CD4-positive, alpha-beta memory T cell (primary cell): ENCODE measurements at regions of chr11 and their contacts with region 1.

Region 1: DNA sequence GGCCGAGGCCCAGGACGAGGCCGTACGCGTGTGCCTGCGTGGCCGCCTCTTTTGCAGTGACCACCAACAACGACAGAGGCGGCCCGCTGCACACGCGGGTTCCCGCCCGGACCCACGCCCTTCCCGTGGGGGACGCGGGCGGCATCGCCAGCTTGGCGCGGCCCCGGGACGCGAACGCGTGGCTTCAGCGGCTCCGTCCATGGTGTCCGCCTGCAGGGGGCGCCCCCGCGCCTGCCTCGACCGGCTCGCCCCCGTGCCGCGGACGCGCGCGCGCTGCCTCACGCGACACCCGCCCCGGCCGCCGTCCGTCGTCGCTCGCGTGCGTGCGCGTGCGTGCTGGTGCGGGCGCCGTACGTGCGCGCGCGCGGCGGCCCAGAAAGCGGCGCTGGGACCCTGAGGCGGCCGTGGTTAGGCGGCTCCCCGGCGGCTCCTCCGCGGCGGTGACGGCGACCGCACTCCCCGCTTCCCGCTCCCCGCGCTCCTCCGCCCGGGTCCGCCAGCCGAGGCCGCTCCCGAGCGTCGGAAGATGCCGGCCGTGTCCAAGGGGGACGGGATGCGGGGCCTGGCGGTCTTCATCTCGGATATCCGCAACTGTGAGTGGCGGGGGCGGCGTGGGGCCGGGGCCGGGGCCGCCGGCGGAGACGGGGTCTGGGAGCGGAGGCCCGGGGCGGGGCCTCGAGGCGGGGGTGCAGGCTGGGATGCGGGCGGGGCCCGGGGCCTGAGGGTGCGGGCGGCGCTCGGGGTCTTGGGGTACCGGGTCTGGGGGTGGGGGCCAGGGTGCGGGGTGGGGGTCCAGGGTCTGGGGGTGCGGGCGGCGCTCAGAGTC is at the start of gene AP2A2:
- DNase-seq: peak; percentile 80 to 94 (median 92)
- H3K4me3 ChIP-seq: peak within 1 kb of the TSS; percentile 52 to 63
- H3K4me3 Mint-ChIP-seq: peak within 1 kb of the TSS; percentile 87 to 90 (median 88)
- H3K27ac ChIP-seq: peak within 1 kb of the TSS; percentile 52
- H3K27ac Mint-ChIP-seq: peak within 1 kb of the TSS; percentile 82 to 94 (median 92)
- H3K4me1 ChIP-seq: peaks cover 39% of the 10 kb centered on the region
- H3K4me1 Mint-ChIP-seq: peaks cover 19 to 37% (median 30%) of the 10 kb centered on the region in 4 donors
- H3K27me3 ChIP-seq: no peaks in the 10 kb centered on the region
- H3K27me3 Mint-ChIP-seq: no peaks in the 10 kb centered on the region
- total RNA-seq, gene AP2A2: 81.7 to 87.4 TPM

Region 2: GRCh38 chr11:355581-356458 is 569.9 kb before region 1 on chr11:
- CTCF ChIA-PET with region 1: no interaction called
- POLR2A ChIA-PET with region 1: no interaction called
- intact Hi-C with region 1: no loop called
- DNase-seq: peak; percentile 85 to 90 (median 86)
- H3K4me3 ChIP-seq: peak overlapping the region in 1 of 2 donors; percentile 59
- H3K4me3 Mint-ChIP-seq: peak overlapping the region; percentile 77 to 91 (median 84)
- H3K27ac ChIP-seq: peak overlapping the region; percentile 89
- H3K27ac Mint-ChIP-seq: peak overlapping the region in 6 of 7 donors; percentile 96 to 99 (median 97)
- H3K4me1 ChIP-seq: peaks cover 20% of the 10 kb centered on the region
- H3K4me1 Mint-ChIP-seq: peaks cover 7 to 50% (median 29%) of the 10 kb centered on the region in 4 donors
- H3K27me3 ChIP-seq: no peaks in the 10 kb centered on the region
- H3K27me3 Mint-ChIP-seq: no peaks in the 10 kb centered on the region

Region 3: GRCh38 chr11:460331-461199 is 465.1 kb before region 1 on chr11:
- CTCF ChIA-PET with region 1: no interaction called
- POLR2A ChIA-PET with region 1: no interaction called
- intact Hi-C with region 1: no loop called
- DNase-seq: no peak
- H3K4me3 ChIP-seq: no peak overlapping the region
- H3K4me3 Mint-ChIP-seq: no peak overlapping the region
- H3K27ac ChIP-seq: no peak overlapping the region
- H3K27ac Mint-ChIP-seq: no peak overlapping the region
- H3K4me1 ChIP-seq: peaks cover 24% of the 10 kb centered on the region
- H3K4me1 Mint-ChIP-seq: peaks cover 20 to 28% (median 22%) of the 10 kb centered on the region in 4 donors
- H3K27me3 ChIP-seq: no peaks in the 10 kb centered on the region
- H3K27me3 Mint-ChIP-seq: no peaks in the 10 kb centered on the region

Region 4: GRCh38 chr11:842370-843002 is 83.2 kb before region 1 on chr11 and contains the starts of genes POLR2L and TSPAN4:
- CTCF ChIA-PET with region 1: no interaction called
- POLR2A ChIA-PET with region 1: interaction called, 4 read pairs
- intact Hi-C with region 1: loop called (anchors 2 kb)
- DNase-seq: peak; percentile 83 to 94 (median 85)
- H3K4me3 ChIP-seq: peak within 1 kb of the TSS; percentile 57 to 97
- H3K4me3 Mint-ChIP-seq: peak within 1 kb of the TSS; percentile 84 to 89 (median 86)
- H3K27ac ChIP-seq: peak within 1 kb of the TSS; percentile 77
- H3K27ac Mint-ChIP-seq: peak within 1 kb of the TSS; percentile 66 to 89 (median 84)
- H3K4me1 ChIP-seq: peaks cover 31% of the 10 kb centered on the region
- H3K4me1 Mint-ChIP-seq: peaks cover 4 to 35% (median 15%) of the 10 kb centered on the region in 4 donors
- H3K27me3 ChIP-seq: no peaks in the 10 kb centered on the region
- H3K27me3 Mint-ChIP-seq: peaks cover 0 to 2% of the 10 kb centered on the region in 2 donors
- total RNA-seq, gene POLR2L: 55.8 to 56.2 TPM
- total RNA-seq, gene TSPAN4: 5.3 to 5.8 TPM

Region 5: DNA sequence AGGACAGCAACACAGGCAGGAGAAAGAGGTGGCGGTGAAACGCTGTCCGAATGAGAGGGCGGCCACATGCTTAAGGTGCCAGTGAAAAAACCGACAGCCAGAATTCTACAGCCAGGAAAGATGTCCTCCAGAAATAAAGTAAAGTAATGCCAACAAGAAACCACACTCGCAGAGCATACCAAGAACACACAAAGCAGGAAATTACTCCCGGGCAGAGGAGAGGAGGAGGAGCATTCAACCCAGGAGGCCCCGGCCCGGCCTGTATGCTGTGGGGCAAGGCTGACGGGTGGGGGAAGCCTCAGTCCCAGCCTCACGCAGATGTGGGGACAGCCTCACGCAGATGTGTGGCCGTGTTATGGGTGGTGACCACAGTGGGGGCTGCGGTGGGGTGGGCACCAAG is 43.1 kb before region 1 on chr11:
- CTCF ChIA-PET with region 1: no interaction called
- POLR2A ChIA-PET with region 1: no interaction called
- intact Hi-C with region 1: no loop called
- DNase-seq: peak in 1 of 5 donors; percentile 7
- H3K4me3 ChIP-seq: no peak overlapping the region
- H3K4me3 Mint-ChIP-seq: no peak overlapping the region
- H3K27ac ChIP-seq: no peak overlapping the region
- H3K27ac Mint-ChIP-seq: no peak overlapping the region
- H3K4me1 ChIP-seq: no peaks in the 10 kb centered on the region
- H3K4me1 Mint-ChIP-seq: no peaks in the 10 kb centered on the region
- H3K27me3 ChIP-seq: no peaks in the 10 kb centered on the region
- H3K27me3 Mint-ChIP-seq: no peaks in the 10 kb centered on the region

Region 6: DNA sequence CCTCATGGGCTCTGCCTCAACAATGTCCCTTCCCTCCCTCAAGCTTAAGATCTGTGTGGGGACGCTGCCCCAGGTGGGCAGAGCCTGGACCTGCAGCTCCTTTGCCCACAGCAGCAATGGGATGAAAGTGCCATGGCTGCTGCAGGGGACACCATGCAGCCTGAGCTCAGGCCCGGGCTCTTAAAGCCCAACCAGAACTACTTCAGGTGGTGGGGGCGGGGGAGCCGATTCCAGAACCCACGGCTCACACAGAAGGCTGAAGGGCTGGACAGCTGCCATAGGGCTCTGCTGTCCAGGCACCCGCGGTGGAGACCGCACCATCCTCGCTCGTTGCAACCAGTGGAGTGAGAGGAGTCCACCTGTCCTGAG is 27.6 kb before region 1 on chr11:
- CTCF ChIA-PET with region 1: no interaction called
- POLR2A ChIA-PET with region 1: no interaction called
- intact Hi-C with region 1: no loop called
- DNase-seq: peak in 1 of 5 donors; percentile 10
- H3K4me3 ChIP-seq: no peak overlapping the region
- H3K4me3 Mint-ChIP-seq: no peak overlapping the region
- H3K27ac ChIP-seq: no peak overlapping the region
- H3K27ac Mint-ChIP-seq: no peak overlapping the region
- H3K4me1 ChIP-seq: no peaks in the 10 kb centered on the region
- H3K4me1 Mint-ChIP-seq: peaks cover 0 to 3% (median 0%) of the 10 kb centered on the region in 4 donors
- H3K27me3 ChIP-seq: no peaks in the 10 kb centered on the region
- H3K27me3 Mint-ChIP-seq: no peaks in the 10 kb centered on the region

Region 7: GRCh38 chr11:910589-911195 is 15.0 kb before region 1 on chr11 and contains the start of gene CHID1:
- CTCF ChIA-PET with region 1: interaction called, 7 read pairs
- POLR2A ChIA-PET with region 1: interaction called, 18 read pairs
- intact Hi-C with region 1: loop called (anchors 1 kb)
- DNase-seq: peak; percentile 76 to 83 (median 79)
- H3K4me3 ChIP-seq: peak within 1 kb of the TSS in 1 of 2 donors; percentile 84
- H3K4me3 Mint-ChIP-seq: peak within 1 kb of the TSS; percentile 89 to 95 (median 92)
- H3K27ac ChIP-seq: peak within 1 kb of the TSS; percentile 56
- H3K27ac Mint-ChIP-seq: peak within 1 kb of the TSS; percentile 47 to 93 (median 84)
- H3K4me1 ChIP-seq: peaks cover 21% of the 10 kb centered on the region
- H3K4me1 Mint-ChIP-seq: peaks cover 7 to 28% (median 14%) of the 10 kb centered on the region in 4 donors
- H3K27me3 ChIP-seq: no peaks in the 10 kb centered on the region
- H3K27me3 Mint-ChIP-seq: no peaks in the 10 kb centered on the region
- total RNA-seq, gene CHID1: 52.1 to 59.2 TPM

Region 8: GRCh38 chr11:1050581-1051355 is 125.1 kb after region 1 on chr11:
- CTCF ChIA-PET with region 1: interaction called, 3 read pairs
- POLR2A ChIA-PET with region 1: interaction called, 3 read pairs
- intact Hi-C with region 1: loop called (anchors 1 kb)
- DNase-seq: peak; percentile 58 to 72 (median 70)
- H3K4me3 ChIP-seq: no peak overlapping the region
- H3K4me3 Mint-ChIP-seq: no peak overlapping the region
- H3K27ac ChIP-seq: no peak overlapping the region
- H3K27ac Mint-ChIP-seq: peak overlapping the region in 1 of 7 donors; percentile 36
- H3K4me1 ChIP-seq: peaks cover 4% of the 10 kb centered on the region
- H3K4me1 Mint-ChIP-seq: peaks cover 0 to 9% (median under 1%) of the 10 kb centered on the region in 4 donors
- H3K27me3 ChIP-seq: no peaks in the 10 kb centered on the region
- H3K27me3 Mint-ChIP-seq: peaks cover 6 to 12% of the 10 kb centered on the region in 2 donors